GM13977 (cell line): ENCODE measurements at regions of chrX and their contacts with region 1.

Region 1: GRCh38 chrX:132615391-132616131 is 126.7 kb upstream of the MBNL3 start:
- DNase-seq: no peak
- CTCF ChIP-seq: peak; percentile 54

Region 2: DNA sequence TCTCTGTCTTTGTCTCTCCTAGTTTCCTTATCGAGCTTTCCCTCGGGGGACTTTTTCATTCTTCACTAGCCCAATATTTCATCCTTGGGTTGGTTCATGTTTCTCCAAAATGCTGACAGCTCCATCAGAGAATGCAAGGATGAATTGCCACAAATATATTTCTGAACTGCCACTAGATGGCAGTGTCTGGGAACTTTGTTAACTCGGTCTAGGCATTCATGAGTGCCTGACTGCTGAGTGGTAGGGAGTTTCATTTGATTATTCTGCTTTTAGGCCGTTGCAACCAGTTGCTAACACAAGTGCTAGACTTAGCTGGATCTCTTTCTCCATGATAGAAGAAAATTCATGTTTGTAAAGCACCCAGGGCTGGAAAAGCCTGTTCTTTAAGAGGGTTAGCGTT is 322.8 kb before region 1 on chrX:
- in situ Hi-C with region 1: loop called (anchors 25 kb)
- DNase-seq: peak; percentile 56
- CTCF ChIP-seq: peak; percentile 71

Region 3: GRCh38 chrX:132732236-132732635 is 116.7 kb after region 1 on chrX:
- in situ Hi-C with region 1: no loop called
- DNase-seq: no peak
- CTCF ChIP-seq: no peak

Region 4: GRCh38 chrX:132957211-132958090 is 341.9 kb after region 1 on chrX:
- in situ Hi-C with region 1: no loop called
- DNase-seq: no peak
- CTCF ChIP-seq: no peak